Dorsolateral prefrontal cortex (tissue), 120 donors: ENCODE measurements at regions of chr14 and their contacts with region 1.

Region 1: GRCh38 chr14:68979021-68979782 is at the start of gene ACTN1:
- DNase-seq: peak; percentile 53 to 92 (median 86)
- H3K4me3 ChIP-seq: peak within 1 kb of the TSS; percentile 41 to 94 (median 83)
- H3K27ac ChIP-seq: peak within 1 kb of the TSS in 58 of 59 donors; percentile 33 to 96 (median 86)
- H3K27me3 ChIP-seq: peaks cover 0 to 17% (median 0%) of the 10 kb centered on the region in 45 donors
- CTCF ChIP-seq: peak in 3 of 56 donors; percentile 5 to 26 (median 8)
- total RNA-seq, gene ACTN1: 56.9 to 234 (median 157) TPM

Region 2: GRCh38 chr14:69049675-69050074 is 70.5 kb after region 1 on chr14:
- intact Hi-C with region 1: loop called in 1 of 2 experiments (anchors 5 kb)
- DNase-seq: no peak
- H3K4me3 ChIP-seq: no peak overlapping the region
- H3K27ac ChIP-seq: peak overlapping the region in 43 of 59 donors; percentile 7 to 85 (median 58)
- H3K27me3 ChIP-seq: no peaks in the 10 kb centered on the region
- CTCF ChIP-seq: no peak